ENCODE measurements at regions of chr18 and their contacts with region 1.

Region 1: DNA sequence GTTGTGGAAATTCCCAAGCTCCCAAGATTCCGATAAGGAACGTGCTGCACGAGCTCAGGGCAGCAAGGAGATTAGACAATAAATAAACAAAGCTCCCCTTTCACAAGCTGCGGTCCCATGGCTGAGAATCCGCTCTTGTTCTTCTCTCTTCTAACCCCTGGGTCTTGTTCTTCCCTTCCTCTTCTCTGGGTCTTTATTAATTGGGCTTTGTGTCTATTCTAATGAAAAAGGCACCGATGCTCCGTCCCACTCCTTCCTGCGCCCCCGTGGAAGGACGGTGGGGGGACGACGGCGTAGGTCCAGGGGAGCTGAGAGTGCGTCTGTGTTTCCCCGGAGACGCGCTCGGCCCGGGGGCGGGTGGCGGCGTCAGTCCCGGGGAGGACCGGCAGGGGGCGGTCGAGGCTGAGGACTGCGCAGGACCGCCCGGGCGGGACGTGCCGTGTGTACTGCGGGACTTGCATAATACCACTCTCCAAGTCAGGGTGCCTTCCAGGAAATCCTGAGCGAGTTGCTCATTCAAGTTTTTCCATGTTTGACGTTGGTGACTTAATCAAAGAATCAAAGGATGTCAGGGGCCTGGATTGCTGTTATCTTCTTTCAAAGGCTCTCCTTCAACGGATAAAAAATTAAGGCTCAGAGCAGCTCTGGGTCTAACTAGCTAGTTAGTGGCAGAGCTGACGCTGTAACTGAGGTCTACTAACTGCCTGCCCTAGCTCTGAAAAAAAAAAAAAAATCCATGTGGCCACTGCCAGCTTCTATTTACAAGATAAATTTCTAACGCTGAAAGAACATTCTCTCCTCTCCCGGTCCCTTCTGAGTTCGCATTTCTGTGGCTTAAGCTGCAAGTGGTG is 321.4 kb downstream of the TGIF1 start:
- DNase-seq: peak; percentile 96
- H3K4me3 Mint-ChIP-seq: peak overlapping the region; percentile 74
- H3K27ac Mint-ChIP-seq: peak overlapping the region; percentile 55
- H3K4me1 Mint-ChIP-seq: peaks cover 39% of the 10 kb centered on the region
- H3K27me3 Mint-ChIP-seq: no peaks in the 10 kb centered on the region
- CTCF ChIP-seq: peak; percentile 97

Region 2: DNA sequence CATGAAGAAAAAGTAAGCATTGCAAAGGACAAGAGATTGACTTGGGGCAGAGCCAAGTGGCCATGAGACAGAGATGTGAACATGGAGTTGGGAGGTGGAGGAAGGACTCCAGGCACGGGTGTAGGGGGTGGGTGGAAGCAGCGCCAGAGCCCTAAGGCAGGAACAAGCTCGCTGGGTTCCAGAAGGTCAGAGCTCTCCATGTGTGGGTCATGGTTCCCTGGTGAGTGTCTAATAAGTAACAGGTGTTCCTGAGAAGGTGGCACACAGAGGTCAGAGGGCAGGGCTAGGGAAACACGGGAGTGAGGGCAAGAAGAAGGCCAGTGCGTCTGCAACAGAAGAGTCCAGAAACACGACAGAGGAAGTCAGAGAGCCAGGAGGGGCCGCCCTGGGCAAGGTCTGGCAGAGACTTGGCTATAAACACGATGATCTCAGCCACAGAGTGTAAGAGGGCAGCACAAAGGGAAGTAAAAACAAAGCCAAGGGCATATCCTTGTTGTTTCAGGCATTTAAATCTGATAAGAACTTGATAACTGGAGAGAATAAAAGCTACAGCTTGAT is 60.6 kb before region 1 on chr18:
- CTCF ChIA-PET with region 1: interaction called, 12 read pairs
- intact Hi-C with region 1: no loop called
- DNase-seq: peak; percentile 80
- H3K4me3 Mint-ChIP-seq: peak overlapping the region; percentile 24
- H3K27ac Mint-ChIP-seq: peak overlapping the region; percentile 88
- H3K4me1 Mint-ChIP-seq: peaks cover 53% of the 10 kb centered on the region
- H3K27me3 Mint-ChIP-seq: no peaks in the 10 kb centered on the region
- CTCF ChIP-seq: no peak

Region 3: GRCh38 chr18:3794537-3795348 is 23.4 kb after region 1 on chr18:
- CTCF ChIA-PET with region 1: interaction called, 14 read pairs
- intact Hi-C with region 1: no loop called
- DNase-seq: peak; percentile 75
- H3K4me3 Mint-ChIP-seq: peak overlapping the region; percentile 6
- H3K27ac Mint-ChIP-seq: peak overlapping the region; percentile 9
- H3K4me1 Mint-ChIP-seq: peaks cover 41% of the 10 kb centered on the region
- H3K27me3 Mint-ChIP-seq: no peaks in the 10 kb centered on the region
- CTCF ChIP-seq: no peak

Region 4: DNA sequence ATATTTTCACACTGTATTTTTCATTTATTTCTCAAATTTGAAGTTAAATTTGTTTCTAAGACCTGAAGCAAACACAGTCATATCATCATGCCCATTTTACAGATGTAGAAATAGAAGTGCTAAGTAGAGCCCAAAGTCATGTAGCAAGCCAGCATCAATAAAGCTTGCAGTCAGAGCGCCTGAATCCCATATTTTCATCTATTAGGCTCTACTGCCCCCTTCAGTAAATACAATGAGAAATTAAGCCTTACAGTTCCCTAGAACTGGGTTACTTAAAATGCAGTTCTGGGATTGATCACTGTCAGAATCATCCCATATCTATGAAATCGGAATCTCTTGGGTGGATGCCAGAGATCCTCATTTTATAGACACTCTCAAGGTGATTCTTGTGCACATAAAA is 98.5 kb after region 1 on chr18:
- CTCF ChIA-PET with region 1: interaction called, 73 read pairs
- intact Hi-C with region 1: loop called (anchors 1 kb)
- DNase-seq: peak; percentile 7
- H3K4me3 Mint-ChIP-seq: no peak overlapping the region
- H3K27ac Mint-ChIP-seq: no peak overlapping the region
- H3K4me1 Mint-ChIP-seq: peaks cover 16% of the 10 kb centered on the region
- H3K27me3 Mint-ChIP-seq: no peaks in the 10 kb centered on the region
- CTCF ChIP-seq: peak; percentile 55